ENCODE measurements at regions of chr3 and their contacts with region 1.

Region 1: DNA sequence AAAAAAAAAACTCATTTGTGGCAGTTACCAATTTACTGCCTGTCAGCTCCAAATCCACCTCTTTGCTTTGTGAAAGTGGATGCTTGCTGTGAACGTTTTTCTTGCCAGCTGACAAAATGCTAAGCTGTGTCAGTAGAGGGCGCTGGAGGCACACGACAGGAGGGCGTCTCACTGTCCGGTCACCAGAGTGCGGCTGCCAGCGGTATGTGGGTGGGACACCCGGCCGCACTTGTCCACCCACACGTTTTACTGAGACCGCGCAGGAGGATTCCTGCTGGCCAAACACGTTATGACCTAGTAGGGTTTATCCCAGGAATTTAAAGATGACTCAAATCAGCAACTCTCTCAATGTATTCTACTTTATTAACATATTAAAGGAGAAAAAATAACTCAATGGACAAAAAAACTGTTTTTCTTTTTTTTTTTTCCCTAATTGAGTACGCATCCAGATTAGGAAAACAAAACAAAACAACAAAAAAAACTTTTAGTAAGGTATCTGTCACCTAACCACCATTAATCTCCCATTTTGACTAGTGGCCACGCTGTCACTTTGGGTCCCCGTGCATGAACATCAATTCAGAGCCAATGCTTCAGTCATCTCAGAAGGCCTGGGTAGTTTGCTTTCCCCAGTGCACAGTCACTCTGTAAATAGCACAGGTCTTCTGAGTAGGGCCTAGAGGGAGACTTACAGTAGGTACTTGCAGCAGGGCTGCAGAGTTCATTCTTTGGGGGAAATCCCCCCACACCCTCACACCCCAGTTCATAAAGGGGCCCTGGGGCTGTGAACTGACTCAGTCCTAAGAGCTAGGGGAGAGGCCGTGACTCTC is 43.8 kb upstream of the RPL35A start:
- DNase-seq: peak; percentile 91
- ATAC-seq: peak; percentile 99

Region 2: DNA sequence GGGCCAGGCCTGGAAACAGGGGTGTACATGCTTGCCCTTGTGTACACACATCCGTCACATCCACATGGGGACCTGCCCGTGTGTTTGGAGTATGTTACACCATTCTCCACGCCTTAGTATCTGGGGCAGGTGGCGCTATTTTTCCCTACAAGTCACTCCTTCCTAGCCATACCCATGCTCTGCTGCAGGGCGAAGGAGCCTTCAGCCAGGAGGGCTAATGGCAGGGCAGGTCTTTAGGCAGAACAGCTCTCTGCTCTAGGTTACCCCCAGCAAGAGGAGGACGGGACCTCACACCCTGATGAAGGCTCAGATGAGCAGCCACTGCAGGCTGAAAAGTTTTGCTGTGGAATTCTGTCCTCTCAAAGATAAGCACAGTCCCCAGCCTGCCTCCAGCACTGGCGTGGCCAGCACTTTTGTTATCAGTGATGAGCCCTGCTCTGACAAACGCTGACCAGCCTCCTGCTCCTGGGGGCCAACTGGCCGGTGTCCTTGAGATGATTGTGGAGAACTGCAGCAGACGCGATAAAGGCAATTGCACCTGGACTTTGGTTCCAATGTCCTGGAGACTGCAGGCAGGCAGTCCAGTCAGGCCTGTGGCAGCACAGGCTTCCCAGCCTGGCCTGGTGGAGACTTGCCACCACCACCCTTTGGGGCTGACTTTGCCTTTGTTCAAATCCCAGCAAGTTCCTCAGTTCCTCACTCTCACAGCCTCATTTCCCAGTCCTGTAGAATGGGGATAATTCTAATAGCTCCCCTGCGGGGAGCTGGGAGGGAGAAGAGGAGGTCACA is 917.8 kb before region 1 on chr3:
- intact Hi-C with region 1: no loop called
- DNase-seq: no peak
- ATAC-seq: peak; percentile 74

Region 3: DNA sequence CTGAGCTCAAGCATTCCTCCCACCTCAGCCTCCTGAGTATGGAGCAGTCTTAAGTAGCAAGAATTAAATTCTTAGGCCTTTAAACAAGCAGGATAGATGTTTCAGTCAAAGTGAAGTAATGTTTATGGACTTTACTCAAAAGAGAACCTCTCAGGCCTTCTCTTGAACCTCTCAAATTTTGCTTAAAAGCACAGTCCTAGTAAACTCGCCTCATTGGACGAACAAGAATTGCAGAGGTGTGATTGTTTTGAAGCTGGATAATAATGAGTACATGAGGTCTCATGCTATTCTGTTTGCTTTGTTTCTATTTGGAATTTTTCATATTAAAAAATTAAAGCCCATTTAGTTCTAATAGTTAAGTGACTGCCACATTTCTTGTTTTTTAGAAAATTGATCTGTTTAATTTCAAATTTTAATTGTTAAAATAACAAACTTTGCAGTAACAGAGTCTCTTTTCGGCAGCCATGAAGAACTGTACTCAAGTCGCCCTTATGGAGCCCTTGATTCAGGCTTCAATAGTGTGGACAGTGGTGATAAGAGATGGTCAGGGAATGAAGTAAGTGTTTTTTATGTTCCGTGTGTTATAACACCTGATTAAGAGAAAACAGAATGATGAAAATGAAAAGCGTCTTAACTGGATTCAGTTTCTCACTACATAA is 75.8 kb before region 1 on chr3:
- intact Hi-C with region 1: no loop called
- DNase-seq: no peak
- ATAC-seq: no peak

Region 4: DNA sequence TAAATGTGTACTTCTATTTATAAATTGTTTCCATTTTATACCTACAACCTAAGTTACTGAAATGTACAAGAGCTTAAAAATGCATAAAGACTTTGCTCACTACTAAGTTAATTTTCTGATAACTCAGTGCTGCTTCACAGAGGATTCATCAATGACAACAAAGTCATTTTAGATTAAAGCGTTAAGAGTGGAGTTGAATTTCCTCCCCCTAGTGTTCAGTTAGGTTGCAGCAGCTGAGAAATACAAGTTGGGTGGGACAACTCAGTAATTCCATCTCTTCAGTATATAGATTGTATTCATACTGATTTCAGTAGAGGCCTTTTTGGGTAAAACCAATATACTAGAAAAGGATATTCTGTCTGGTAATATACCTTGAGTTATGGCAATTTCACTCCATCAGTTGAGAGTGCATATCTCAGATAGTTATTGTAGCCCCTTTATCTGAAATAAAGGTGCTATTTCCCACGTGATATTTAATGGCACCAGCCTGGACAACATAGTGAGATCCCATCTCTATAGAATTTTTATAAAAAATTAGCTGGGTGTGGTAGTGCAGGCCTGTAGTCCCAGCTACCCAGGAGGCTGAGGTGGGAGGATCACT is 36.8 kb after region 1 on chr3:
- intact Hi-C with region 1: loop called (anchors 2 kb)
- DNase-seq: no peak
- ATAC-seq: no peak

Measured in left ventricle myocardium superior (tissue), 1 donor.